CD4-positive, alpha-beta T cell (primary cell): ENCODE measurements at regions of chr1 and their contacts with region 1.

Region 1: GRCh38 chr1:235866913-235867845 is 473 bp upstream of the LYST start:
- DNase-seq: peak; percentile 95 to 99 (median 98)
- ATAC-seq: peak; percentile 66
- H3K4me3 ChIP-seq: peak overlapping the region; percentile 87
- H3K4me3 Mint-ChIP-seq: peak overlapping the region; percentile 98
- H3K27ac ChIP-seq: peak overlapping the region; percentile 95 to 99
- H3K27ac Mint-ChIP-seq: peak overlapping the region; percentile 98
- H3K4me1 ChIP-seq: peaks cover 44% of the 10 kb centered on the region
- H3K4me1 Mint-ChIP-seq: peaks cover 55% of the 10 kb centered on the region
- H3K27me3 ChIP-seq: no peaks in the 10 kb centered on the region
- H3K27me3 Mint-ChIP-seq: no peaks in the 10 kb centered on the region
- CTCF ChIP-seq: no peak

Region 2: GRCh38 chr1:235504496-235505222 is 362.5 kb before region 1 on chr1:
- CTCF ChIA-PET with region 1: interaction called, 4 read pairs
- POLR2A ChIA-PET with region 1: interaction called, 14 read pairs
- intact Hi-C with region 1: loop called (anchors 5 to 10 kb)
- DNase-seq: peak; percentile 96 to 100 (median 98)
- ATAC-seq: peak; percentile 86
- H3K4me3 ChIP-seq: peak overlapping the region; percentile 79
- H3K4me3 Mint-ChIP-seq: peak overlapping the region; percentile 92
- H3K27ac ChIP-seq: peak overlapping the region; percentile 89 to 93
- H3K27ac Mint-ChIP-seq: peak overlapping the region; percentile 96
- H3K4me1 ChIP-seq: peaks cover 15% of the 10 kb centered on the region
- H3K4me1 Mint-ChIP-seq: peaks cover 20% of the 10 kb centered on the region
- H3K27me3 ChIP-seq: no peaks in the 10 kb centered on the region
- H3K27me3 Mint-ChIP-seq: no peaks in the 10 kb centered on the region
- CTCF ChIP-seq: peak; percentile 91

Region 3: GRCh38 chr1:235888119-235888643 is 21.0 kb after region 1 on chr1:
- CTCF ChIA-PET with region 1: interaction called, 3 read pairs
- POLR2A ChIA-PET with region 1: interaction called, 11 read pairs
- intact Hi-C with region 1: loop called in 1 of 2 experiments (anchors 2 kb)
- DNase-seq: peak in 12 of 14 experiments; percentile 12 to 79 (median 32)
- ATAC-seq: peak; percentile 92
- H3K4me3 ChIP-seq: peak overlapping the region; percentile 30
- H3K4me3 Mint-ChIP-seq: peak overlapping the region; percentile 81
- H3K27ac ChIP-seq: peak overlapping the region; percentile 40 to 78
- H3K27ac Mint-ChIP-seq: peak overlapping the region; percentile 86
- H3K4me1 ChIP-seq: peaks cover 10% of the 10 kb centered on the region
- H3K4me1 Mint-ChIP-seq: peaks cover 22% of the 10 kb centered on the region
- H3K27me3 ChIP-seq: no peaks in the 10 kb centered on the region
- H3K27me3 Mint-ChIP-seq: no peaks in the 10 kb centered on the region
- CTCF ChIP-seq: no peak

Region 4: GRCh38 chr1:235923466-235924021 is 56.4 kb after region 1 on chr1:
- CTCF ChIA-PET with region 1: no interaction called
- POLR2A ChIA-PET with region 1: interaction called, 12 read pairs
- intact Hi-C with region 1: loop called in 1 of 2 experiments (anchors 5 kb)
- DNase-seq: peak in 10 of 14 experiments; percentile 6 to 71 (median 22)
- ATAC-seq: peak; percentile 83
- H3K4me3 ChIP-seq: no peak overlapping the region
- H3K4me3 Mint-ChIP-seq: peak overlapping the region; percentile 36
- H3K27ac ChIP-seq: peak overlapping the region; percentile 15 to 44
- H3K27ac Mint-ChIP-seq: peak overlapping the region; percentile 79
- H3K4me1 ChIP-seq: peaks cover 29% of the 10 kb centered on the region
- H3K4me1 Mint-ChIP-seq: peaks cover 24% of the 10 kb centered on the region
- H3K27me3 ChIP-seq: no peaks in the 10 kb centered on the region
- H3K27me3 Mint-ChIP-seq: no peaks in the 10 kb centered on the region
- CTCF ChIP-seq: no peak

Region 5: GRCh38 chr1:236281654-236282424 is 414.7 kb after region 1 on chr1 and contains the start of gene ERO1B:
- CTCF ChIA-PET with region 1: no interaction called
- POLR2A ChIA-PET with region 1: no interaction called
- intact Hi-C with region 1: loop called in 1 of 2 experiments (anchors 5 kb)
- DNase-seq: peak; percentile 92 to 99 (median 98)
- ATAC-seq: peak; percentile 92
- H3K4me3 ChIP-seq: peak within 1 kb of the TSS; percentile 88
- H3K4me3 Mint-ChIP-seq: peak within 1 kb of the TSS; percentile 97
- H3K27ac ChIP-seq: peak within 1 kb of the TSS; percentile 63 to 81
- H3K27ac Mint-ChIP-seq: peak within 1 kb of the TSS; percentile 80
- H3K4me1 ChIP-seq: peaks cover 25% of the 10 kb centered on the region
- H3K4me1 Mint-ChIP-seq: peaks cover 57% of the 10 kb centered on the region
- H3K27me3 ChIP-seq: no peaks in the 10 kb centered on the region
- H3K27me3 Mint-ChIP-seq: no peaks in the 10 kb centered on the region
- CTCF ChIP-seq: no peak
- total RNA-seq, gene ERO1B: 15.2 to 16.5 TPM